Cardiac septum (tissue), 1 donor: ENCODE measurements at regions of chr1 and their contacts with region 1.

Region 1: GRCh38 chr1:27858072-27858958 is 14.0 kb upstream of the THEMIS2 start:
- DNase-seq: peak; percentile 91

Region 2: GRCh38 chr1:27979151-27979858 is 121.0 kb after region 1 on chr1:
- intact Hi-C with region 1: loop called (anchors 5 kb)
- DNase-seq: no peak

Region 3: DNA sequence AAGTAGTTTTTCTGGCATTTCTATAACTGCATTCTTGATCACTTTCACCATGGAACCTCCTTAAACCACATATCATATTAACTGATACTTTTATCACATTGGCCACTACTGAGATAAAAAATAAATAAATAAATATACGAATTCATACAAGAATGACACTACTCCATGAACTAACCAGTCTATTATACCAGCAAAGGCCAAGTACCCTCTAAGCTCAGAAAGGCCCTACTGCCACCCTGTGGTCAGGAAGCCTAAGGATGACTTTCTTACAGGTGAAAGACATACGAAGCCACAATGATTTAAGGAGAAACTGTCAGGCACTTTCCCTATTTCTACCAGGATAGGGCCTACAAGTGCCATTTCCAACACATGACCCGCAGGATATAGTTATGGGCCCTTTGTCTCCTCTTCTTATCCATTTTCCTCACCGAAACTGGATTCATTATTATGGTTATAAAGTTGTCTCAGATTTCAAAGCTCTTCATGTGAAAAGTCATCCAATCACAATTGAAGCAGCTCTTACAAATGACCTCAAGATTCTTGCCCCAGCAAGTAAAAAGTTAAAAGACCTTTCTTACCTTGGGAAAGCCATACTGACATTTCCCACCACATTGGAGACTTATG is 350.6 kb after region 1 on chr1:
- intact Hi-C with region 1: loop called (anchors 5 kb)
- DNase-seq: peak; percentile 78